ENCODE measurements at regions of chr2 and their contacts with region 1.

Region 1: GRCh38 chr2:222903234-222904220 is 42.7 kb downstream of the ACSL3 start:
- DNase-seq: peak in 1 of 2 donors; percentile 66
- ATAC-seq: peak in 2 of 3 donors; percentile 72 to 79
- H3K4me3 ChIP-seq: no peak overlapping the region
- H3K4me3 Mint-ChIP-seq: no peak overlapping the region
- H3K27ac ChIP-seq: no peak overlapping the region
- H3K27ac Mint-ChIP-seq: no peak overlapping the region
- H3K4me1 ChIP-seq: no peaks in the 10 kb centered on the region
- H3K4me1 Mint-ChIP-seq: peaks cover 45 to 54% of the 10 kb centered on the region in 2 donors
- H3K27me3 ChIP-seq: no peaks in the 10 kb centered on the region
- H3K27me3 Mint-ChIP-seq: no peaks in the 10 kb centered on the region
- CTCF ChIP-seq: peak; percentile 67

Region 2: GRCh38 chr2:222690564-222691200 is 212.8 kb before region 1 on chr2:
- intact Hi-C with region 1: loop called (anchors 1 kb)
- DNase-seq: peak; percentile 45 to 87
- ATAC-seq: peak; percentile 95 to 100 (median 99)
- H3K4me3 ChIP-seq: no peak overlapping the region
- H3K4me3 Mint-ChIP-seq: no peak overlapping the region
- H3K27ac ChIP-seq: no peak overlapping the region
- H3K27ac Mint-ChIP-seq: no peak overlapping the region
- H3K4me1 ChIP-seq: no peaks in the 10 kb centered on the region
- H3K4me1 Mint-ChIP-seq: peaks cover 0 to 5% of the 10 kb centered on the region in 2 donors
- H3K27me3 ChIP-seq: no peaks in the 10 kb centered on the region
- H3K27me3 Mint-ChIP-seq: peaks cover 0 to 5% of the 10 kb centered on the region in 2 donors
- CTCF ChIP-seq: peak; percentile 98

Region 3: DNA sequence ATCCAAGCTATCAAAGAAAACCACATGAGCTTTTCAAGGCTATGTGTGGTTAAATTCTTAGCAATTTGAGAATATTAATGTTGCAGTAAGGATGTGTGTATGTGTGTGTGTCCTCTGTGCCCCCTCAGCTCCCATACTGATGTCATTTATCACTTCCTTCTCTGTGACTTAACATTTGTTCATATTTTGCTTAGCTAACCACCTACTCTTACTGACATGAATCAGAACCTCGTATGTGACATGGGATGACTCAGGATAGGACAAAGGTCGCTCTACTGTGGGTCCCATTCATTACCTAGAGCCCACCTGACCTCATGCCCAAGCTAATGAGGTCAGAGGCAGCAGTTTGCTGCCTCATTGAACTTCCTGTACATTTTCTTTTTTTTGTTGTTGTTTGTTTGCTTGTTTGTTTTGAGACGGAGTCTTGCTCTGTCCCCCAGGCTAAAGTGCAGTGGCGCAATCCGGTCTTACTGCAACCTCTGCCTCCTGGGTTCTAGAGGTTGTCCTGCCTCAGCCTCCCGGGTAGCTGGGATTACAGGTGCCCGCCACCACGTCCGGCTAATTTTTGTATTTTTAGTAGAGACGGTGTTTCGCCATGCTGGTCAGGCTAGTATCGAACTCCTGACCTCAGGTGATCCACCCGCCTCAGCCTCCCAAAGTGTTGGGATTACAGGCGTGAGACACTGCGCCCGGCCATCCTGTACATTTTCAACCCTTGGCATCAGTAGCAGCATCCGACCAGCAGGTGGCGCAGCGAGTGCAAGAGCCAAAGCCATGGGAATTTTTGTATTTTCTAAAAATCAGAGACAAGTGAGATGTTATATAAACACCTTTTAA is 195.6 kb before region 1 on chr2:
- intact Hi-C with region 1: loop called (anchors 1 kb)
- DNase-seq: peak; percentile 70 to 84
- ATAC-seq: peak; percentile 72 to 78 (median 74)
- H3K4me3 ChIP-seq: no peak overlapping the region
- H3K4me3 Mint-ChIP-seq: no peak overlapping the region
- H3K27ac ChIP-seq: no peak overlapping the region
- H3K27ac Mint-ChIP-seq: peak overlapping the region in 1 of 2 donors; percentile 10
- H3K4me1 ChIP-seq: peaks cover 9% of the 10 kb centered on the region
- H3K4me1 Mint-ChIP-seq: peaks cover 6 to 12% of the 10 kb centered on the region in 2 donors
- H3K27me3 ChIP-seq: peaks cover 5% of the 10 kb centered on the region
- H3K27me3 Mint-ChIP-seq: peaks cover 16% of the 10 kb centered on the region in 2 donors
- CTCF ChIP-seq: peak; percentile 98

Region 4: DNA sequence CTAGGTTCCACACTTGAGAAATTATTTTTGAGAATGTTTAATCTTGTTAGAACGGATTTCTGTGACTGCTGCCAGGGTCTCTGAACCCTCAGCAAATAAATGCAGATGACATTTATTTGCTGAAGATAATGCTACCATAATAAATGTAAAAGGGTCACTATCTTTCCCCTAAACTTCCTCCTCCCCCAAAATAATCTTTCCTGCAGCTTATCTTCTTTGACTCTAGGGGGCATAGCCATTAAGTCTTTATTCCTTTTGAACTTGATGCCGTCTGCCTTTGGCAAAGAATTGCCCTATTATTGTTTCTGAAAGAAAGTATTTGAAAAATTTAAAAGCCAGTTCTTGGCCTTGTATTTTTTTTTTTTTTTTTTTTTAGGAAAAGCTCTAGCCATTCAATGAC is 106.3 kb before region 1 on chr2:
- intact Hi-C with region 1: loop called (anchors 10 kb)
- DNase-seq: peak in 1 of 2 donors; percentile 11
- ATAC-seq: no peak
- H3K4me3 ChIP-seq: no peak overlapping the region
- H3K4me3 Mint-ChIP-seq: no peak overlapping the region
- H3K27ac ChIP-seq: no peak overlapping the region
- H3K27ac Mint-ChIP-seq: no peak overlapping the region
- H3K4me1 ChIP-seq: no peaks in the 10 kb centered on the region
- H3K4me1 Mint-ChIP-seq: no peaks in the 10 kb centered on the region
- H3K27me3 ChIP-seq: no peaks in the 10 kb centered on the region
- H3K27me3 Mint-ChIP-seq: peaks cover 4 to 6% of the 10 kb centered on the region in 2 donors
- CTCF ChIP-seq: peak; percentile 32

Region 5: DNA sequence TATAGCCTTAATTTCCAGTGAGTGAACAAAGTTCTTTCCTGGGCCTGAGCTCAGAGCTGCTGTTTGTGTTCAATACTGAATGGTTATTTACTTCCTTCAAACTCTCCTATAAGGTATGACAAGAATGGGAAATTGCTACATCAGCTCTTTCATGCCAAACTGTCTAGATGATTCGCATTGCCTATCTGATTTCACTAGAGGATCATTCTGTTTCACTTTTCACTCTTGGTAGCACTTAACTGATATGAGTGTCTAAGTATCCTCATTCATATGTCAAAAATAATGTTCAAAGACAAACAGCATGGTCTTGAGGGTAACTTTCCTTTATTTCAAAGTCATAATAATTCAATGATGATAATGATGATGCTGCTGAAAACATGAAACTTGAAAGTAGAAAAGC is 731.6 kb after region 1 on chr2:
- intact Hi-C with region 1: no loop called
- DNase-seq: no peak
- ATAC-seq: no peak
- H3K4me3 ChIP-seq: no peak overlapping the region
- H3K4me3 Mint-ChIP-seq: no peak overlapping the region
- H3K27ac ChIP-seq: no peak overlapping the region
- H3K27ac Mint-ChIP-seq: no peak overlapping the region
- H3K4me1 ChIP-seq: no peaks in the 10 kb centered on the region
- H3K4me1 Mint-ChIP-seq: no peaks in the 10 kb centered on the region
- H3K27me3 ChIP-seq: no peaks in the 10 kb centered on the region
- H3K27me3 Mint-ChIP-seq: peaks cover 2 to 6% of the 10 kb centered on the region in 2 donors
- CTCF ChIP-seq: no peak

Measured in natural killer cell (primary cell).